B cell (primary cell): ENCODE measurements at regions of chr7 and their contacts with region 1.

Region 1: GRCh38 chr7:134632937-134633540 is 13.6 kb upstream of the BPGM start:
- DNase-seq: peak; percentile 66
- ATAC-seq: peak; percentile 68
- H3K4me3 ChIP-seq: no peak overlapping the region
- H3K4me3 Mint-ChIP-seq: no peak overlapping the region
- H3K27ac ChIP-seq: no peak overlapping the region
- H3K27ac Mint-ChIP-seq: no peak overlapping the region
- H3K4me1 ChIP-seq: peaks cover 0 to 3% of the 10 kb centered on the region in 2 donors
- H3K4me1 Mint-ChIP-seq: peaks cover 10% of the 10 kb centered on the region
- H3K27me3 ChIP-seq: peaks cover 0 to 13% (median 3%) of the 10 kb centered on the region in 4 experiments
- H3K27me3 Mint-ChIP-seq: peaks cover 30% of the 10 kb centered on the region
- CTCF ChIP-seq: peak; percentile 79

Region 2: DNA sequence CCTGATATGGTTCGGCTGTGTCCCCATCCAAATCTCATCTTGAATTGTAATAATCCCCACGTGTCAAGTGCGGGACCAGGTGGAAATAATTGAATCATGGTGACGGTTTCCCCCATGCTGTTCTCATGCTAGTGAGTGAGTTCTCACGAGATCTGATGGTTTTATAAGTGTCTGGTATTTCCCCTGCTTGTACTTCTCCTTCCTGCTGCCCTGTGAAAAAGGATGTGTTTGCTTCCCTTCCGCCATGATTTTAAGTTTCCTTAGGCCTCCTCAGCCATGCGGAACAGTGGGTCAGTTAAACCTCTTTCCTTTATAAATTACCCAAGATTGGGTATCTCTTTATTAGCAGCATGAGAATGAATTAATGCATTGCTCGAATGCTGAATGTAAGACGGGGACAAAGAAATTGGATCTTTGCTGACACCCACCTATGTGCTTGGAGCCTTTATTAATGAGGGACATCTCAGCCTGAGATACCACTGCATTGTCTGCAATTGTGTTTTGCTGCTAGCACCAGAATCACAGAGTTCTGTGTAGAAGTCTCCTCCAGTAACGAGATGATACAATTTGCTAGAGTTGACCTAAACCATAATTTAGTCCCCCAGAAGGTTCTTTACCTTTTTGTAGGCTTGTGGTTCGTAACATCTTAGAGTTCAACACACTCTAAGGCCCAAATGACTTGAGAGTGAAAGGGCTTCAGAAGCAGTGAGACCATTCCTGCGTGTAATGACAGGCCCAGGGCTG is 345.0 kb before region 1 on chr7:
- CTCF ChIA-PET with region 1: no interaction called
- POLR2A ChIA-PET with region 1: no interaction called
- intact Hi-C with region 1: no loop called
- DNase-seq: no peak
- ATAC-seq: no peak
- H3K4me3 ChIP-seq: no peak overlapping the region
- H3K4me3 Mint-ChIP-seq: no peak overlapping the region
- H3K27ac ChIP-seq: no peak overlapping the region
- H3K27ac Mint-ChIP-seq: no peak overlapping the region
- H3K4me1 ChIP-seq: peaks cover 9 to 10% of the 10 kb centered on the region in 2 donors
- H3K4me1 Mint-ChIP-seq: peaks cover 12% of the 10 kb centered on the region
- H3K27me3 ChIP-seq: no peaks in the 10 kb centered on the region
- H3K27me3 Mint-ChIP-seq: peaks cover 3% of the 10 kb centered on the region
- CTCF ChIP-seq: no peak

Region 3: DNA sequence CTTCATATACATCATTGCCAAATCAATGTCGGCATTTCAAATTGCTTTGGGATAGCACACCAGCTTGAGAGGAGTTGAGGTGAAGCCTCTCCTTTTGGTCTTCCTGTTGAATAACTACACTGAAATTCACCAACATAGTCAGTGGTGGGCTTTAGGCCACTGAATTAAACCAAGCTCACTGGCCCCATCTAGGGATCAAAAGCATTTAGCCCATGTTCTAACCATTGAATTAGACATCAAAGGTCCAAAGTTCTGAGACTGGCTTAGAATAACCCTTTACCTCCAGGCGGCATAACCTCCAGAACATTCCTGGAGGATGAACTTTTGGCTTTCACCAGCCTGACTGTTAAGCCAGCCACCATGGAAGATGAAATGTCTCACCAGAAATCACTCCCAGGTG is 68.2 kb after region 1 on chr7:
- CTCF ChIA-PET with region 1: interaction called, 43 read pairs
- POLR2A ChIA-PET with region 1: no interaction called
- intact Hi-C with region 1: no loop called
- DNase-seq: peak; percentile 29
- ATAC-seq: peak; percentile 31
- H3K4me3 ChIP-seq: no peak overlapping the region
- H3K4me3 Mint-ChIP-seq: no peak overlapping the region
- H3K27ac ChIP-seq: no peak overlapping the region
- H3K27ac Mint-ChIP-seq: no peak overlapping the region
- H3K4me1 ChIP-seq: no peaks in the 10 kb centered on the region
- H3K4me1 Mint-ChIP-seq: no peaks in the 10 kb centered on the region
- H3K27me3 ChIP-seq: no peaks in the 10 kb centered on the region
- H3K27me3 Mint-ChIP-seq: peaks cover 12% of the 10 kb centered on the region
- CTCF ChIP-seq: peak; percentile 55

Region 4: DNA sequence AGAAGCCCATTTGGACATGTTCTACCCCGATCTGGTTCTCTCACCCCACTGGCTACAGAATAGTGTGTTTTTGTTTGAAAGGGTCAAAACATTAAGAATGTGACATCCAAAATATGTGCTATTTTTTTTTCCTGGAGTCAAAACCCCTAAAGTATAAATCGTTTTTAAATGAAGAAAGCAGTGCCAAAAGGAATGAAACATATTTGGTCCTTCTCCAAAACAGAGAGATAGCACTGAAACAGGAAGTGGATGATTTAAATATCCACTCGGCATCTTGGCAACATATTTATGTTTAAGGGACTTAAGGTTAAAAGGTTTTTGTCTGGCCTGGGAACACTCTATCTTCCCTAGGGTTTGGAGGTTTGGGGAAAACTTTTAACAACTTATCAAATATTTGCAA is 178.7 kb after region 1 on chr7:
- CTCF ChIA-PET with region 1: no interaction called
- POLR2A ChIA-PET with region 1: no interaction called
- intact Hi-C with region 1: no loop called
- DNase-seq: no peak
- ATAC-seq: no peak
- H3K4me3 ChIP-seq: no peak overlapping the region
- H3K4me3 Mint-ChIP-seq: no peak overlapping the region
- H3K27ac ChIP-seq: no peak overlapping the region
- H3K27ac Mint-ChIP-seq: no peak overlapping the region
- H3K4me1 ChIP-seq: no peaks in the 10 kb centered on the region
- H3K4me1 Mint-ChIP-seq: no peaks in the 10 kb centered on the region
- H3K27me3 ChIP-seq: no peaks in the 10 kb centered on the region
- H3K27me3 Mint-ChIP-seq: peaks cover 17% of the 10 kb centered on the region
- CTCF ChIP-seq: no peak

Region 5: DNA sequence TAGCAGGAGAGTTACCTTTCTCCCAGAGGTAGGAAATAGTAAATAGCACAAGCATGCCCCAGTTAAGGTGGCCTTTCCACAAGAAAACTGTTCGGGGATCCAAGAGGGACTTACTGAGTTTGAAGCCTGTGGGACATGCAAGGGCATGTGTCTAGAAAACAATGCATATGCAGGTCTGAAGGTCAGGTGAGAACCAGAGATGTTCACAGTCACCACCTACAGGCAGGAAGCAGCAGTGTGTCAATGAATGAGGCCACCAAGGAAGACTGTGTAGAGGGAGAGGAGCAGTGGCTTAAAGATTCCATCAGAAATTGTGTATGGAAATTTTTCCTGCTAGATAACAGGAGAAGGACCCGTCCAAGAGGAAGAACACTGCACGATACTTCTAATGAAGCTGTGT is 212.4 kb after region 1 on chr7:
- CTCF ChIA-PET with region 1: interaction called, 14 read pairs
- POLR2A ChIA-PET with region 1: no interaction called
- intact Hi-C with region 1: no loop called
- DNase-seq: peak; percentile 18
- ATAC-seq: no peak
- H3K4me3 ChIP-seq: no peak overlapping the region
- H3K4me3 Mint-ChIP-seq: no peak overlapping the region
- H3K27ac ChIP-seq: no peak overlapping the region
- H3K27ac Mint-ChIP-seq: no peak overlapping the region
- H3K4me1 ChIP-seq: no peaks in the 10 kb centered on the region
- H3K4me1 Mint-ChIP-seq: no peaks in the 10 kb centered on the region
- H3K27me3 ChIP-seq: peaks cover 0 to 5% (median 0%) of the 10 kb centered on the region in 4 experiments
- H3K27me3 Mint-ChIP-seq: peaks cover 7% of the 10 kb centered on the region
- CTCF ChIP-seq: no peak

Region 6: DNA sequence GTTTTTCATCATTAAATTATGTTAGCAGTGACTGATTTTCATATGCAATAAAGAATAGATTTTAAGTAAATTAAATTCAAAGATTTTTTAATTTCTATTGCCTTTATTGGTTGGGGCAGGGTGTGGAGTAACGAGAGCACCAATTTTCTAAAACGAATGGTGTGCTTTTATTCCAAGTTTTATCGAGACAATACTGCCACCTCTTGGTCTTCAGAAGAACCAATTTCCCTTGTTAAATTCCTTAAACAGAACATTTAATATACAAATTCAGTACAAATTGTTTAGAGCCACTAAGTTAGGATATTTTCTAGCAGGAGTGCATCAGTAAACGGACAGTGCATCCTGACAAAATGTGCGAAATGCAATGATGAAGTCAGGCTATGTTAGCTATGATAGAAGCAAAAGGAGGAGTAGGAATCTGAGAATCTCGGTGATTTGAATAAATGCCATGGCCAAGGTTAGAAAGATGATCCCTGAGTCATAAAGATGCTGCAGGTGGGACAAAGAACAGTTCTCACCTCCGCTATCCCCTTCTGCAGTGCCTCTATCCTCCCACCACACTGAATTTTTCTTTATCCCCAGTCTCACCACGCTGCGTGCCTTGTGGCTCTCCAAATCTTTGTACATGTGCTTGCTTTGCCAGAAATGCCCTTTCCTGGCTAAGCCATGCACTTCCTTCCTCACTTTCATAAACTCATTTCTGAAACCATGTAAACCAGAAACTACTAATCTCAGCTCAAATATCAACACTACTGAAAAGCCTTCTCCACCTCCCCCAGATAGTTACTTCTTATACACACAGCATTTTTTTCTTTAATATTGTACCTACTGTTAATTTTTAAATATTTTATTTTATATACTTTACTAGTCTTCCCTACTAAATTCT is 321.4 kb after region 1 on chr7:
- CTCF ChIA-PET with region 1: interaction called, 106 read pairs
- POLR2A ChIA-PET with region 1: no interaction called
- intact Hi-C with region 1: loop called (anchors 1 kb)
- DNase-seq: peak; percentile 47
- ATAC-seq: no peak
- H3K4me3 ChIP-seq: no peak overlapping the region
- H3K4me3 Mint-ChIP-seq: no peak overlapping the region
- H3K27ac ChIP-seq: no peak overlapping the region
- H3K27ac Mint-ChIP-seq: no peak overlapping the region
- H3K4me1 ChIP-seq: no peaks in the 10 kb centered on the region
- H3K4me1 Mint-ChIP-seq: no peaks in the 10 kb centered on the region
- H3K27me3 ChIP-seq: no peaks in the 10 kb centered on the region
- H3K27me3 Mint-ChIP-seq: no peaks in the 10 kb centered on the region
- CTCF ChIP-seq: peak; percentile 73